Thyroid gland (tissue), 4 donors: ENCODE measurements at regions of chr10 and their contacts with region 1.

Region 1: DNA sequence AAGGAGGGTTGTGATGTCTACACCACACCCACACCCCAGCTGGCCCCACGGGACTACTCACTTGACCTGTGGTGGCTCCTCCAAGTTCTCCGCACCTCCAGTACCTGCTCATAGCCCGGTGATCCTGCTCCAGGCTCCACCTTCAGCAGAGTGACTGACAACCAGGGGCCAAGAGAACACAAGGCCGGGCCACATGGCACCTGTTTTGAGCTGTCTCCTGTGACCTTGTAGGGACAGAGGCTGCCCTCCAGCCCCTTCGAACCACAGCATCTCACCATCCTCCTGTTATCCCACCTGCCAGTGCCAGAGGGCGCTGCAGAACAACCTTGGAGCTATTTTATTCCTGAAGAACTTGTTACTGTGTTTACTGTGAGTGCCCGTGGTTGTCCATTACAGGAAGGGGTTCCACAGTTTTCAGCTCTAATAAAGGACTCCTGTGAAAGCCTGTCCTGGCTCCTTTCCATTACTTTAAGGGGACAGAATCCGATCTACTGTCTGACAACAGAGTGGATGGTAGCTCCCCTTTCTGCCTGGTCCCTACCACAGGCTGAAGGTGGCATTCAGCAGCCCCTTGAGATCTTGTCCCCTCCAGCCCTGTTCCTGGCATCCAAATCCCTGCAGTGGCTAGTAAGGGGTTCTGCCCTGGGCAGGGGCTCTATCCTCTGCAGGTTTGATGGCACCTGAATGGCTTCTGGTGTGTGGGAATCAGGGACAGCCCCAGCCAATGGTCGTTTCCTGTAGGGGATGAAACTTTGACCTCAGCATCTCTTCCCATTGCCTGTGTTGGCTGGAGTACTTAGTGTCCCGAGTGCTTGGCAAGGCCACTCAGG is 50.8 kb downstream of the C10orf120 start:
- DNase-seq: peak; percentile 45 to 50
- H3K4me3 ChIP-seq: no peak overlapping the region
- H3K27ac ChIP-seq: no peak overlapping the region
- H3K4me1 ChIP-seq: no peaks in the 10 kb centered on the region
- H3K27me3 ChIP-seq: no peaks in the 10 kb centered on the region
- CTCF ChIP-seq: peak; percentile 21 to 64 (median 55)
- POLR2A ChIP-seq: no peak

Region 2: DNA sequence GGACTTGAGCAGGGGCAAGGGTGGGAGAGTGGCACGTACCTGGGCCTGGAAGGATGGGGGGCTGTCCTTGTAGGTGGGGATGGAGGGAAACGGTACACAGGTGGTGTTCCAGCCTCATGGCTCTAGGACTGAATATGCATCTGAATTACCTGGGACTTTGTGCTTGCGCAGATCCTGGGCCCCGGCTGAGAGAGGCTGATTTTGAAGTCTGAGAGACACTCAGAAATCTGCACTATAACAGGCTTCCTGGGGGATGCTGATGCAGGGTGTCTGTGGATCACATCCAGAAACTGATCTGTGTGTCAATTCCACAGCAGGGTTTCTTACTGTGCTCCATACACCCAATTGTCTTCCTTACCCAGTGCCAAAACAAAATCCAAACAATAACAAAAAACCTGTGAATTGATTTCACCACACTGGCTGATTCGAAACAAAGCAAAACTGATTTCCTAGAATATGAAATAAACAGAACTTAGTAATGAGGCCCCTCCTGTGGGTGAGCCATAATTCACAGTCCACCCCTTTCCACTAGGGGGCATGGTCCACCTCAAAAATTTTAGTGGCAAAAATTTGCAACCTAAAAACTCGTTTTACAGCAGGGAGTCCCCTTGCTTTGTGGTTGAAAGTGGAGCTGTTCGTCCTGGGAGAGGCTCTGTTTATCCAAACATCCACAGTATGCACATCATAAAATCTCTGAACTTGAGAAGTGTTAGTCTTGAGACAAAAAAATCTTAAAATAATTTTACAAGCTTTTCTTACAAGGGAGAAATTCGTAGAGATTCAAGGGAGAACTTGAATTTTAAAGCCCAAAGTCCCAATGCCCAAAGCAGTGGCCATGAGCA is 306.3 kb before region 1 on chr10:
- intact Hi-C with region 1: no loop called
- DNase-seq: peak; percentile 33 to 50
- H3K4me3 ChIP-seq: no peak overlapping the region
- H3K27ac ChIP-seq: no peak overlapping the region
- H3K4me1 ChIP-seq: peaks cover 0 to 6% of the 10 kb centered on the region in 2 donors
- H3K27me3 ChIP-seq: no peaks in the 10 kb centered on the region
- CTCF ChIP-seq: peak; percentile 52 to 71 (median 64)
- POLR2A ChIP-seq: no peak

Region 3: DNA sequence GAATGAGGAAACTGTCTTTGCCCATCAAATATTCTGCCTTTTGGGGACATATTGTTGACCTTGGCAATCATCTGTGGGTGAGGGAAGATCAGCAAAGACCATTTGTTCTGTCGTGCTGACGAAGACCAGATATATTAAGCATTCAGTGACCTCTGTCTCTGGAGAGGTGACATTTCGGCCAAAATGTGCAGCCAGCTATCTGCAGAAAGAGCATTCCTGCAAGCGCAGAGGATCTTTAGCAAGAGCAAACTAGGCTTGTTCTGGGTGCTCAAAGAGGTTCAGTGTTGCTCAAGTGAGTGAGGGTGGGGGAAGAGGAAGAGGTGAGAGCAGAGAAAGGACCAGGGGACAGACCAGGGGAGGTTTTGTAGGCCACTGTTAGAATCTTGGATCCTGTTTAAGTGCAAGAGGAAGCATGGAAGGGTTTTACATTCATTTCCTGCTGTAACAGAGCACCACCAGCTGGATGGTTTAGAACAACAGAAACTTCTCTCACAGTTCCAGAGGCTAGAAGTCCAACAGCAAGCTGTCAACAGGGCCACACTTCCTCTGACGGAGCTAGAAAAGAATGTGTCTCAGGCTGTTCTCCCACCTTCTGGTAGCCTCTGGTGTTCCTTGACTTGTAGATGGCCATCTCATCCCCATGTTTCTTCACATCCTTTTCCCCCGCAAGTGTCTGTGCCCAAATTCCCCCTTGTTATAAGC is 39.6 kb after region 1 on chr10:
- intact Hi-C with region 1: no loop called
- DNase-seq: no peak
- H3K4me3 ChIP-seq: no peak overlapping the region
- H3K27ac ChIP-seq: no peak overlapping the region
- H3K4me1 ChIP-seq: no peaks in the 10 kb centered on the region
- H3K27me3 ChIP-seq: no peaks in the 10 kb centered on the region
- CTCF ChIP-seq: no peak
- POLR2A ChIP-seq: no peak

Region 4: GRCh38 chr10:122703439-122704118 is 54.8 kb after region 1 on chr10:
- intact Hi-C with region 1: loop called (anchors 10 kb)
- DNase-seq: peak; percentile 60 to 68
- H3K4me3 ChIP-seq: no peak overlapping the region
- H3K27ac ChIP-seq: no peak overlapping the region
- H3K4me1 ChIP-seq: no peaks in the 10 kb centered on the region
- H3K27me3 ChIP-seq: no peaks in the 10 kb centered on the region
- CTCF ChIP-seq: peak; percentile 54 to 80 (median 66)
- POLR2A ChIP-seq: no peak